Activated T-helper 2 cell treated with anti-CD3 and anti-CD28 coated beads, Interferon-gamma antibody, Interleukin-2, Interleukin-4, amounts not matched to agents 10 μg/mL and 5 μg/mL and 100 μg/mL, durations not matched to agents 14 hours and 24 hours and 36 hours (primary cell): ENCODE measurements at regions of chr3 and their contacts with region 1.

Region 1: DNA sequence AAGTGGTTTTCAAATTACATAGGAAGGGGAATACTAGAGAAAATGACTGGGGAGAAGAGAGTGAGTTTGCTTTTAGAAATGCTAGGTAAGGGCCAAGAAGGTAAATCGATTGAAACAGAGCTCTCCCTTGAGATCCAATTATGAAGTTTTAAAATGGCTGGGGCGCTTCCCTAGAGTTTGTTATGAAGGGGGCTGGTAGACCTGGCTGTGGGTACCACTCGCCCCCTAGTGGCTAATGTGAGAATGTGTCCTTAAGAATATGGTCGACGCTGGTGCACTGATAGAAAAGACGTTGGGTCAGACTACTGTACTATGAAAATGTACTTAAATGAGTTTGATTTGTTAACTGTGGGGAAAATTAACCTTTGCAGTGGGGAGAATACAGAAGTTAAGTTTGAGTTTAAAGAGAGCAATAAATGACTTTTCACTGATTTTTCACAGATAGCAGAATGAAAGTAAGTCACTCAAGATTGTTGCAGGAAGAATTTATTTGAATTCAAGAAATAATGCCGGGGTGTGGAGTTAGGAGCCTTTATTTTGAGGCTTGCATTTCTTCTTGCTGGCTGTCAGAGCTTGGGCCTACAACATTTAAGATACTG is 9.2 kb downstream of the TMPRSS7 start:
- DNase-seq: peak; percentile 37
- H3K4me3 Mint-ChIP-seq: no peak overlapping the region
- H3K27ac Mint-ChIP-seq: no peak overlapping the region
- H3K4me1 Mint-ChIP-seq: peaks cover 5% of the 10 kb centered on the region
- H3K27me3 Mint-ChIP-seq: peaks cover 2% of the 10 kb centered on the region

Region 2: DNA sequence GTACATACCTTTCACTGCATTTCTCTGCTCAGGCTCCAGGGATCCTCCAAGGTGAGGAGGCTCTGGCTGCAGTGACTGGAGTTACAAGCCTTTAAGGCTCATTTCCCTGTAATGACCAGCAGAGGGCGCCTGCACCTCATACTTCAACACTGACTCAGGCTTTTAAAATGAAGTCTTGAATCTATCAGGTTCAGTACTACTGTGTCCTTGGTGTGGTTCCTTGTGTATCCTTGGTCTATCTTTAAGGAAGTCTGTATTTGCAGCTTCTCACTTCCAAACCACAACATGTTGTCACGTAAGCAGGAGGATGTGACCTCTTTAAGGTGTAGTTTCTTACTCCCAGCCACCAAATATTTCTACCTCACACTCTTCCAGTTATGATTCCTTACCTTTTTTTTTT is 326.1 kb before region 1 on chr3:
- intact Hi-C with region 1: loop called (anchors 5 kb)
- DNase-seq: peak; percentile 45
- H3K4me3 Mint-ChIP-seq: no peak overlapping the region
- H3K27ac Mint-ChIP-seq: no peak overlapping the region
- H3K4me1 Mint-ChIP-seq: peaks cover 1% of the 10 kb centered on the region
- H3K27me3 Mint-ChIP-seq: no peaks in the 10 kb centered on the region

Region 3: DNA sequence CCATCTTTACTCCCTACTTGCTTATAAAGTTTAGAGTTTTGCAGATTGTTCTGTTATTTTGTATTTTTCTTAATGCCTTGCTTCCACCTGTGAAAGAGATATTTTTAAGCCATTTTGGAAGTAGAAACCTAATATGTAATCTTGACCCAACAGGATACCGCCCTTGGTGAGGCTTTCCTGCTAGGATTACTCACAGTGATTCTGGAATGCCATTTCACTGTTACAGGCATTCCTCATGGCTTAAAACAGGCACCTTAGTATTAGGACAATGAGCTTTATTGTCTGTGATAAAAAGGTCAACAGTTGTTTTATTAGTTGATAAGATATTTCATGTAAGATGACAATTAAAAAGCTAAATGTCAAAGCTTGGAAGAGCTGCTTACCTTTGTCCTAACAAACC is 126.4 kb before region 1 on chr3:
- intact Hi-C with region 1: no loop called
- DNase-seq: no peak
- H3K4me3 Mint-ChIP-seq: no peak overlapping the region
- H3K27ac Mint-ChIP-seq: no peak overlapping the region
- H3K4me1 Mint-ChIP-seq: no peaks in the 10 kb centered on the region
- H3K27me3 Mint-ChIP-seq: peaks cover 15% of the 10 kb centered on the region

Region 4: DNA sequence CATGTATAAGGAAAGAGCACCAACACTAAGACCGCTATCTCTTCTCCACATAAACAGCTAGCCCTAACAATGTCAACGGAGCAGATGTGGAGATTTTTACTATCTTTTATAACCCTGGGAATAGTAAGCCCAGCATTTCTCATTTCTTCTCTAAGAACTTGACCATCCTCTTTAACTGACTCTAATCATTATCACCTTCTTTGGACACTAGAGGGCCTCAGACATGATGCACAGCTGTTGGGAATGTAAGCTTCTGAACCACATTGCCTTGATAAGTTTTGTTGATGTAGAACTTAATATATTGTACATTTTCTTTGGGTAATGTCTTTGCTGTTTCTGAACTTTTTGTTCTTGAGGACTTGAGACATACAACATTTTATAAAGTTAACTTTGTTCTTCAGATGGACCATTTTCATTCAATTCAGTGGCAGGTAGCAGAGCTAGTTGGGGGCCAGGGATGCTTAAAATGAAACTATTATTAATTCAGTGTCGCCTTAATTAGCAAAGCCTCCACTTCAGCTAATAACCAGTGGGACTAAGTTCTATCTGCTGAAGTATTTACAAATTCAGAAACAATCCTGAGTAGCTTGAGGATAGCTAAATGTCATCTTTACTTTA is 54.5 kb before region 1 on chr3:
- intact Hi-C with region 1: loop called (anchors 1 kb)
- DNase-seq: no peak
- H3K4me3 Mint-ChIP-seq: no peak overlapping the region
- H3K27ac Mint-ChIP-seq: no peak overlapping the region
- H3K4me1 Mint-ChIP-seq: peaks cover 33% of the 10 kb centered on the region
- H3K27me3 Mint-ChIP-seq: no peaks in the 10 kb centered on the region

Region 5: GRCh38 chr3:112086076-112086854 is 42.6 kb after region 1 on chr3 and contains the start of gene C3orf52:
- intact Hi-C with region 1: loop called (anchors 5 kb)
- DNase-seq: peak; percentile 67
- H3K4me3 Mint-ChIP-seq: peak within 1 kb of the TSS; percentile 85
- H3K27ac Mint-ChIP-seq: peak within 1 kb of the TSS; percentile 81
- H3K4me1 Mint-ChIP-seq: peaks cover 44% of the 10 kb centered on the region
- H3K27me3 Mint-ChIP-seq: peaks cover 2% of the 10 kb centered on the region
- total RNA-seq, gene C3orf52: 11.7 and 13.3 TPM in 2 replicates

Region 6: DNA sequence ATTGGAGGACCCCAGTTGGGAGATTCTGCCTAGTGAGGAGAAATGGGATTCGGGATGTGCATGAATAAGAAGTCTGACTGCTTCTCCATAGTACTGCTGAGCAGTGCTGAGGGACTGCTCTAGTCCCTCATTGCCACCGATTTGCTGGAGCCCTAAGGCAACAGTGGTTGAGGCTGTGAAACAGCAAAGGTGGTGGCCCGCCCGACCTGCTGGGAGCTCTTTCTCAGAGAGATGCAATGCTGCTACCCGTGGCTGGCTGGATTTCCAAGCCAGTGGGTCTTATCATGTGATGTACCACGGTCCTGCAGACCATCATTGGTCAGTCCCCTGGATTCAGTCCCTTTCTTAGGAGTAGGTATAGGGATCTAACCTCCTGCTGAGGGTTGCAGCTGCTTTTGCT is 131.9 kb after region 1 on chr3:
- intact Hi-C with region 1: no loop called
- DNase-seq: no peak
- H3K4me3 Mint-ChIP-seq: no peak overlapping the region
- H3K27ac Mint-ChIP-seq: no peak overlapping the region
- H3K4me1 Mint-ChIP-seq: no peaks in the 10 kb centered on the region
- H3K27me3 Mint-ChIP-seq: peaks cover 1% of the 10 kb centered on the region